Calu3 (cell line): ENCODE measurements at regions of chr18 and their contacts with region 1.

Region 1: DNA sequence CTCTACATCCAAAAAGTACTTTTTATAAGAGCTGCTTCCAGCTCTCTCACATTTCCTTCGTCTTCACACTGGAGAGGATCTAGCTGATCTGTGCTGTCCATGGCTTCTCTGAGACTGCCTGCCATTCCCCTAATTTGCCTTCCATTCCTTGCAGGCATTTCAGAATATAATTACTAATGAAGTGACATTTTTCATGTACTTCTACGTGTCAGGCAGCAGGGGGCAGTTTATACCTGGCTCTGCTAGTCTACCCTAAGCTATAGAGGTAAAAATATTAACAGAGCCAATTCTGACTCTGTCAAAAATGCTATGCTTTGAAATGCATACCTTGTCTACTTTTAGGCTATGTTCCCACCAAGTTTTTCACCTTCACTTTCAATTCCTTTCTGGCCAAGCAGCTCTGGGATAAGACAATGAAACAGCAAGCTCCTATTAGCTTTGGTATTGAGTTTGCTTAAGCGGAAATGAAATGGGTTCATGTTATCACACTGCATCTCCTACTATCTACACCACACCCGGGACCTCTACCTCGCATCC is 81.9 kb downstream of the MEP1B start:
- DNase-seq: peak; percentile 61
- H3K4me3 Mint-ChIP-seq: no peak overlapping the region
- H3K27ac Mint-ChIP-seq: no peak overlapping the region
- H3K4me1 Mint-ChIP-seq: peaks cover 17% of the 10 kb centered on the region
- H3K27me3 Mint-ChIP-seq: no peaks in the 10 kb centered on the region
- CTCF ChIP-seq: peak; percentile 65

Region 2: DNA sequence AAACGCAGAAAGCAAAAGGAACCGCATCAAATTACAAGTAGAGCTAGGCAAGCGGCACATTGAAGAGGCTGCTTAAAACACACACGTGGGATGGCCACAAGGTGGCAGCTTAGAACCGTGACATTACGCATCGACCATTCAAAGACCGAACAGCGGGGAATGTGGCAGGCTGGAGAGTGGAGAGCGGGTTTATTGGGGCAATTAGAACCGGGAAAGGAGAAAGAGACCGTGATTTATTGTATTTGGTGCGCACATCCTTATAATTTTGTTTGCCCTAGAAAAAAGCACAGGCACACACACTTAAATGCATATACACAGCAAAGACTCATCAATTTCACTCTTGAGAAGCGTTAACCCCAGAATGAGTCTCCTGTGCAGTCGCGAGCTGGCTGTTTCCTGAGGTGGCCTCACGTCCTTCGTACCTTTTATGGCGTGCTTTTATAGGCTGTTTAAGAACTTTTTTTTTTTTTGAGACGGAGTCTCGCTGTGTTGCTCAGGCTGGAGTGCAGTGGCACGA is 113.6 kb before region 1 on chr18:
- CTCF ChIA-PET with region 1: interaction called, 14 read pairs
- intact Hi-C with region 1: loop called (anchors 2 kb)
- DNase-seq: peak; percentile 78
- H3K4me3 Mint-ChIP-seq: peak overlapping the region; percentile 71
- H3K27ac Mint-ChIP-seq: no peak overlapping the region
- H3K4me1 Mint-ChIP-seq: peaks cover 20% of the 10 kb centered on the region
- H3K27me3 Mint-ChIP-seq: no peaks in the 10 kb centered on the region
- CTCF ChIP-seq: peak; percentile 80